ENCODE measurements at regions of chr5 and their contacts with region 1.

Region 1: GRCh38 chr5:38666668-38667498 is 110.4 kb upstream of the LIFR start:
- DNase-seq: peak; percentile 65
- ATAC-seq: peak; percentile 94
- H3K4me3 ChIP-seq: no peak overlapping the region
- H3K27ac ChIP-seq: no peak overlapping the region
- H3K4me1 ChIP-seq: peaks cover 16% of the 10 kb centered on the region
- H3K27me3 ChIP-seq: no peaks in the 10 kb centered on the region
- CTCF ChIP-seq: peak; percentile 62

Region 2: GRCh38 chr5:38556599-38557305 is 110.1 kb before region 1 on chr5 and contains the start of gene LIFR:
- intact Hi-C with region 1: loop called (anchors 10 kb)
- DNase-seq: peak; percentile 91
- ATAC-seq: peak; percentile 92
- H3K4me3 ChIP-seq: peak within 1 kb of the TSS; percentile 72
- H3K27ac ChIP-seq: peak within 1 kb of the TSS; percentile 96
- H3K4me1 ChIP-seq: peaks cover 17% of the 10 kb centered on the region
- H3K27me3 ChIP-seq: no peaks in the 10 kb centered on the region
- CTCF ChIP-seq: no peak
- total RNA-seq, gene LIFR: 151 TPM